ENCODE measurements at regions of chr2 and their contacts with region 1.

Region 1: GRCh38 chr2:61470965-61471904 is at the start of gene USP34:
- DNase-seq: peak; percentile 97
- ATAC-seq: peak; percentile 91
- H3K4me3 Mint-ChIP-seq: peak within 1 kb of the TSS; percentile 83
- H3K27ac Mint-ChIP-seq: peak within 1 kb of the TSS; percentile 94
- H3K4me1 Mint-ChIP-seq: peaks cover 29% of the 10 kb centered on the region
- H3K27me3 Mint-ChIP-seq: no peaks in the 10 kb centered on the region
- total RNA-seq, gene USP34: 63.7 to 67.6 TPM

Region 2: GRCh38 chr2:60756191-60757041 is 714.8 kb before region 1 on chr2 and contains the start of gene PAPOLG:
- CTCF ChIA-PET with region 1: no interaction called
- POLR2A ChIA-PET with region 1: no interaction called
- intact Hi-C with region 1: loop called in 1 of 2 experiments (anchors 2 kb)
- DNase-seq: peak; percentile 99
- ATAC-seq: peak; percentile 98
- H3K4me3 Mint-ChIP-seq: peak within 1 kb of the TSS; percentile 99
- H3K27ac Mint-ChIP-seq: peak within 1 kb of the TSS; percentile 100
- H3K4me1 Mint-ChIP-seq: peaks cover 34% of the 10 kb centered on the region
- H3K27me3 Mint-ChIP-seq: no peaks in the 10 kb centered on the region
- total RNA-seq, gene PAPOLG: 13.8 to 14.2 TPM

Region 3: GRCh38 chr2:61328707-61329251 is 142.5 kb before region 1 on chr2:
- CTCF ChIA-PET with region 1: no interaction called
- POLR2A ChIA-PET with region 1: interaction called, 3 read pairs
- intact Hi-C with region 1: loop called in 1 of 2 experiments (anchors 5 kb)
- DNase-seq: no peak
- ATAC-seq: peak; percentile 95
- H3K4me3 Mint-ChIP-seq: no peak overlapping the region
- H3K27ac Mint-ChIP-seq: peak overlapping the region; percentile 82
- H3K4me1 Mint-ChIP-seq: peaks cover 19% of the 10 kb centered on the region
- H3K27me3 Mint-ChIP-seq: no peaks in the 10 kb centered on the region

Region 4: DNA sequence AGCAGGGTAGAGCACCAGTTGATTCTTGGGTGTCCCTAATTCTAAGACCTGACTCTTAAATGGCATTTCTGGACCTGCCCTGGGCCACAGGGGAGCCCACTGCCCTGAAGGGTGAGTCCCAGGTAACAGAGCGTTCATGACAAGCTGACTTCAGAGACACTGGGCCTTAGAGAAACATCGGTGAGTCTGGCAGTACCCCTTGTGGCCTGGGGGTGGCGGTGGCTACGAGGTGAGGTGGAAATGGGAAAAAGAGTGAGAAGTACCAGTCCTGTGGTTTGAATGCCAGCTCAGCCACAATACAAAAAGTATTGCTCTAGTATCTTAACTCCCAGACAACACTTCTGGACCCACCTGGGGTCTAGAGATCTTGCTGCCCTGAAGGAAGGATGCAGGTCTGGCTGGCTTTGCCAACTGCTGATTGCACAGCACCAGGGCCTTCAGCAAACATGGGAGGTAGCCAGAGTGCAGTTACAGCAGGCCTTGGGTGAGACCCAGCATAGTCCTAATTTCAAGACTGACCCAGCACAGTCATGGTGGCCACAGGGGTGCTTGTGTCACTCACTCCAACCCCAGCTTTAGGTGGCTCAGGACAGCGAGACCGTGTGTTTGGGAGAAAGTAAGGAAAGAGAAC is 44.9 kb before region 1 on chr2:
- CTCF ChIA-PET with region 1: interaction called, 7 read pairs
- POLR2A ChIA-PET with region 1: interaction called, 4 read pairs
- intact Hi-C with region 1: loop called (anchors 1 to 5 kb)
- DNase-seq: peak; percentile 87
- ATAC-seq: peak; percentile 96
- H3K4me3 Mint-ChIP-seq: no peak overlapping the region
- H3K27ac Mint-ChIP-seq: peak overlapping the region; percentile 87
- H3K4me1 Mint-ChIP-seq: peaks cover 65% of the 10 kb centered on the region
- H3K27me3 Mint-ChIP-seq: no peaks in the 10 kb centered on the region

Region 5: GRCh38 chr2:61550375-61551209 is 79.4 kb after region 1 on chr2:
- CTCF ChIA-PET with region 1: no interaction called
- POLR2A ChIA-PET with region 1: no interaction called
- intact Hi-C with region 1: no loop called
- DNase-seq: no peak
- ATAC-seq: no peak
- H3K4me3 Mint-ChIP-seq: no peak overlapping the region
- H3K27ac Mint-ChIP-seq: no peak overlapping the region
- H3K4me1 Mint-ChIP-seq: no peaks in the 10 kb centered on the region
- H3K27me3 Mint-ChIP-seq: no peaks in the 10 kb centered on the region

Region 6: DNA sequence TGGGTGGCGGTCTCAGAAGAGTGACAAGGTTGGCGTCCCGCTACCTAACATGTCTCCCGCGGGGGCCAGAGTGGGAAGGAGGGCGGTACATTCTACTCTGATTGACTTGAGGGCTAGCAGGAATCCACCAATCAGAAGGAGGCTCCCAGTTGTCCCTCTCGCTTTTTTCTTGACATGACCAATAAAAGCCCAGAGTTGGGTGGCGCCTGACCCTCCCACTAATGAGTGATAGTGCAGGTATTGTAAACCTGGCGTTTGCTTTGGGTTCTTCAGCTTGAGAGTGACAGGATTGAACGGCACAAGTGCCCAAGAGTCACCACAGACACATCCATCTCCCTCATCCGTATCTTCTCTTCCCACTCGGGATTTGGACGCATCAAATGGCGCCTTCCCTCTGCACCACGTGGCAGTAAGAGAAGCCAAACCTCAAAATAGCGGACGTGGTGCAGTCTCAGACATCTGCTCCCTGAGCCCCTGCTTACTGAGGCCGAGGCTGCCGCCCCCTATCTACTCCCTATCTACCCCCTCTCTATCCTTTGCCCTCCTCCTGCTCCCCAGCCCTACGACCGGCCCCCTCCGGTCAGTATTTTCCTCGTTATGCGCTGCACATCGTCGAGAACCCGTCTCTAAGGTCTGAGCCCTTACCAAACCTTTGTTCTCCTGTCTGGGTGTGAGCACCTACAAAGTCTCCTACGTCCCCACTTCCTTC is 383.4 kb after region 1 on chr2:
- CTCF ChIA-PET with region 1: no interaction called
- POLR2A ChIA-PET with region 1: no interaction called
- intact Hi-C with region 1: loop called in 1 of 2 experiments (anchors 1 kb)
- DNase-seq: peak; percentile 93
- ATAC-seq: peak; percentile 94
- H3K4me3 Mint-ChIP-seq: peak overlapping the region; percentile 99
- H3K27ac Mint-ChIP-seq: peak overlapping the region; percentile 94
- H3K4me1 Mint-ChIP-seq: peaks cover 20% of the 10 kb centered on the region
- H3K27me3 Mint-ChIP-seq: no peaks in the 10 kb centered on the region

Region 7: DNA sequence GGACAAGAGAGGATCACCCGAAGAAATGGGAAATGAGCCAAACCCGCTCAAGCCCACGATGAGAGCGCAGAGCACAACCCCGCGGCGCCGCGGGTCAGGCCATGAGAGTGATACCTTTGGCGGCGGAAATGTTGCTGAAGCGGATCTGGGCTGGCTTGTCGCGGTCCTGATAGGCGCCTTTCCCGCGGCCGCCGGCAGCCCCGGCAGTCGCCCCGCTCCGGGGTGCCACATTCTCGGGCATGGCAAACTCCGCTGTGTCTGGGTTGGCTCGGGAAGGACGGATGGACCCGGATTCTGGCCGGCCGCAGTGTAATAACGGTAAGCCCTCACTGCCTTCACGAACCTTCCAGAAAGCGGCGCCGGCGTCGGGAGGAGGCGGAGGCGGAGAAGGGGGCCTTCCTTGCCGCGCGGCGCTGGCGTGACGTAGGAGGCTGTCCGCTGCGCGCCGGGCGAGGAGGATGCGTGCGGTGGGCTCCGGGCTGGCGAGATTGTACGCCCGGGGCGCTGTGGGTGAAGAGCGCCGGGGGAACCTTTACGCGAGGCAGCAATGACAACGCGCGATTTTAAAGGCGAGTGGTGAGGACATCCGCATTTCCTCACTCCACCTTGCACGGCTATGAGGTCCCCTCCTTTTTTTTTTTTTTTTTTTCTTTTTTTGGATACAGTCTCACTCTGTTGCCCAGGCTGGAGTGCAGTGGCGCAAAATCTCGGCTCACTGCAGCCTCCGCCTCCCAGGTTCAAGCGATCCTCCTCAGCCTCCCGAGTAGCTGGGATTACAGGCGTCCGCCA is 417.2 kb after region 1 on chr2 and contains the start of gene CCT4:
- CTCF ChIA-PET with region 1: no interaction called
- POLR2A ChIA-PET with region 1: no interaction called
- intact Hi-C with region 1: loop called in 1 of 2 experiments (anchors 1 kb)
- DNase-seq: peak; percentile 93
- ATAC-seq: peak; percentile 79
- H3K4me3 Mint-ChIP-seq: peak within 1 kb of the TSS; percentile 99
- H3K27ac Mint-ChIP-seq: peak within 1 kb of the TSS; percentile 99
- H3K4me1 Mint-ChIP-seq: peaks cover 31% of the 10 kb centered on the region
- H3K27me3 Mint-ChIP-seq: no peaks in the 10 kb centered on the region
- total RNA-seq, gene CCT4: 255 to 373 TPM